MCF 10A (cell line): ENCODE measurements at regions of chr6 and their contacts with region 1.

Region 1: GRCh38 chr6:26156076-26156849 is 69.0 kb downstream of the HFE start:
- DNase-seq: peak; percentile 91
- H3K4me3 Mint-ChIP-seq: peak overlapping the region; percentile 82
- H3K27ac Mint-ChIP-seq: peak overlapping the region; percentile 64
- H3K4me1 Mint-ChIP-seq: peaks cover 23% of the 10 kb centered on the region
- H3K27me3 Mint-ChIP-seq: no peaks in the 10 kb centered on the region
- CTCF ChIP-seq: no peak

Region 2: GRCh38 chr6:26025894-26026832 is 130.1 kb before region 1 on chr6:
- CTCF ChIA-PET with region 1: interaction called, 3 read pairs
- POLR2A ChIA-PET with region 1: interaction called, 291 read pairs
- intact Hi-C with region 1: no loop called
- DNase-seq: peak; percentile 96
- H3K4me3 Mint-ChIP-seq: peak overlapping the region; percentile 83
- H3K27ac Mint-ChIP-seq: peak overlapping the region; percentile 84
- H3K4me1 Mint-ChIP-seq: peaks cover 17% of the 10 kb centered on the region
- H3K27me3 Mint-ChIP-seq: no peaks in the 10 kb centered on the region
- CTCF ChIP-seq: peak; percentile 81

Region 3: DNA sequence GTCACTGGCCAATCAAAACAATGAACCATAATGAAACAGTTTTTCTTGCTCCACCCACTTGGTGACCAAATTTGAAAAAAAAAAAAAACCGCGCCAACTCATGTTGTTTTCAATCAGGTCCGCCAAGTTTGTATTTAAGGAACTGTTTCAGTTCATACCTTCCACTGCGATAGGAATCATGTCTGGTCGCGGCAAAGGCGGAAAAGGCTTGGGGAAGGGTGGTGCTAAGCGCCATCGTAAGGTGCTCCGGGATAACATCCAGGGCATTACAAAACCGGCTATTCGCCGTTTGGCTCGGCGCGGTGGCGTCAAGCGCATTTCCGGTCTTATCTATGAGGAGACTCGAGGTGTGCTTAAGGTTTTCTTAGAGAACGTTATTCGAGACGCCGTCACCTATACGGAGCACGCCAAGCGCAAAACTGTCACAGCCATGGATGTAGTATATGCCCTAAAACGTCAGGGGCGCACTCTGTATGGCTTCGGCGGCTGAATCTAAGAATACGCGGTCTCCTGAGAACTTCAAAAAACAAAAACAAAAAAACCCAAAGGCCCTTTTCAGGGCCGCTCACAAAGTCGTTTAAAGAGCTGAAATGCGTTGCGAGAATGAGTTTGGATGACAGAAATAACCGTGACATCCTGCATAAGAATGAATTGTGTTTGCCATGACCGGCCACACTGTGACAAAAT is 52.4 kb before region 1 on chr6:
- CTCF ChIA-PET with region 1: no interaction called
- POLR2A ChIA-PET with region 1: interaction called, 112 read pairs
- intact Hi-C with region 1: loop called (anchors 1 kb)
- DNase-seq: peak; percentile 96
- H3K4me3 Mint-ChIP-seq: peak overlapping the region; percentile 75
- H3K27ac Mint-ChIP-seq: peak overlapping the region; percentile 92
- H3K4me1 Mint-ChIP-seq: peaks cover 11% of the 10 kb centered on the region
- H3K27me3 Mint-ChIP-seq: no peaks in the 10 kb centered on the region
- CTCF ChIP-seq: peak; percentile 41

Region 4: DNA sequence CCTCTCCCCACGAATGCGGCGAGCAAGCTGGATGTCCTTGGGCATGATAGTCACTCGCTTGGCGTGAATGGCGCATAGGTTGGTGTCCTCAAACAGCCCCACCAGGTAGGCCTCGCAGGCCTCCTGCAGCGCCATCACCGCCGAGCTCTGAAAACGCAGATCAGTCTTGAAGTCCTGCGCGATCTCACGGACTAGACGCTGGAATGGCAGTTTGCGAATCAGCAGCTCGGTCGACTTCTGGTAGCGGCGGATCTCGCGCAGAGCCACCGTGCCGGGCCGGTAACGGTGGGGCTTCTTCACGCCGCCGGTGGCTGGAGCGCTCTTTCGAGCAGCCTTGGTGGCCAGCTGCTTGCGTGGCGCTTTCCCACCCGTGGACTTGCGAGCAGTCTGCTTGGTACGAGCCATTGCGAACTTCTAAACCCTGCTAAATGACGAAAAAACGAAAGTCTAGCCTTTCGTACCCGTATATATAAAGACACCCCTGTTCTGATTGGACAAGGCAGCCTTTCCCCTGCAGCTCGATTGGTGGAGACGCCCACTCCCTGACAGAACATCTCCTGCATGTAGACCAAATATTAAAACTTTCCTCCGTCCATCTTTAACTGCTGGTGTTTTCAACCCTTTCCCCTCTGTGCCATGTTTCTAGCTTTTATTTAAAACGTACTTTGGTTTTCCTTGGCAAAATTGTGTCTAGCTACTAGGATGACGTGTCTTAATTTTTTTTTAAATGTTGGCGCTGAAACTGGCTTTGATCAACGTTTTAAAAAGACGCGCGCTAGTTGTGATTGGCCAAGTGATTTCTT is 40.8 kb after region 1 on chr6:
- CTCF ChIA-PET with region 1: no interaction called
- POLR2A ChIA-PET with region 1: interaction called, 1,160 read pairs
- intact Hi-C with region 1: loop called (anchors 1 kb)
- DNase-seq: peak; percentile 94
- H3K4me3 Mint-ChIP-seq: peak overlapping the region; percentile 93
- H3K27ac Mint-ChIP-seq: peak overlapping the region; percentile 96
- H3K4me1 Mint-ChIP-seq: peaks cover 28% of the 10 kb centered on the region
- H3K27me3 Mint-ChIP-seq: no peaks in the 10 kb centered on the region
- CTCF ChIP-seq: no peak

Region 5: GRCh38 chr6:26270903-26271667 is 114.8 kb after region 1 on chr6:
- CTCF ChIA-PET with region 1: interaction called, 3 read pairs
- POLR2A ChIA-PET with region 1: interaction called, 170 read pairs
- intact Hi-C with region 1: no loop called
- DNase-seq: peak; percentile 97
- H3K4me3 Mint-ChIP-seq: no peak overlapping the region
- H3K27ac Mint-ChIP-seq: peak overlapping the region; percentile 54
- H3K4me1 Mint-ChIP-seq: peaks cover 6% of the 10 kb centered on the region
- H3K27me3 Mint-ChIP-seq: no peaks in the 10 kb centered on the region
- CTCF ChIP-seq: no peak

Region 6: DNA sequence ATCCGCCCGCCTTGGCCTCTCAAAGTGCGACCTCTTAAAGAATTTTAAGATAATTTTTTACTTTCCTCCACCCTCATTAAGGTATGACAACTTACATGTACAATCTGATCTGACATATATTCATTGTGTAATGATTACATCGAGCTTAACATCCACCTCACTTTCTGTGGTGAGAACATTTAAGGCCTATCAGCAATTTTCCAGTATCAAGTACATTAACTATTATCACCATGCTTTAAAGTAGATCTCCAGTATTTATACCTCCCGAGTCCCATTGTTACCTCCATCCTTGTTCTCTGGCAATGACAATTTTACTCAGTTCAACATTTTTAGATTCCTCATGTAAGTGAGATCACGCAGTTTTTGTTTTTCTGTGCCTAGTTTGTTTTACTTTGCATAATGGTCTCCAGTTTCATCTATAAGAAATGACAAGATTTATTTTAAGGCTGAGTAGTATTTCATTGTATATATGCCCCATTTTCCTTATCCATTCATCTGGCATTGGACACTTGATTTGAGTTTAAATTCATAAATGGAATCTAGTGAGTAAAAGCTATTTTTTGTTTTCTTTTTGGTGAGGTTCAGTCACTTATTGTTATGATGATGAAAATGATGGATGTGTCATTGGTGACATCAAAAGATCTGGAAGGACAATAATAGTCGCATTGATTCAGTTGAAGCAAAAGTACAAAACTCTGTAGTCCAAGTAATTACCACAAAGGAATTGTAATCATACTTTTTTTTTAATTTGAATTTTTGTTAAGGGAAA is 1668.9 kb after region 1 on chr6:
- CTCF ChIA-PET with region 1: no interaction called
- POLR2A ChIA-PET with region 1: interaction called, 44 read pairs
- intact Hi-C with region 1: no loop called
- DNase-seq: no peak
- H3K4me3 Mint-ChIP-seq: peak overlapping the region; percentile 94
- H3K27ac Mint-ChIP-seq: peak overlapping the region; percentile 95
- H3K4me1 Mint-ChIP-seq: peaks cover 10% of the 10 kb centered on the region
- H3K27me3 Mint-ChIP-seq: no peaks in the 10 kb centered on the region
- CTCF ChIP-seq: no peak